Activated CD4-positive, alpha-beta memory T cell treated with anti-CD3 and anti-CD28 coated beads for 36 hours (primary cell): ENCODE measurements at regions of chr10 and their contacts with region 1.

Region 1: DNA sequence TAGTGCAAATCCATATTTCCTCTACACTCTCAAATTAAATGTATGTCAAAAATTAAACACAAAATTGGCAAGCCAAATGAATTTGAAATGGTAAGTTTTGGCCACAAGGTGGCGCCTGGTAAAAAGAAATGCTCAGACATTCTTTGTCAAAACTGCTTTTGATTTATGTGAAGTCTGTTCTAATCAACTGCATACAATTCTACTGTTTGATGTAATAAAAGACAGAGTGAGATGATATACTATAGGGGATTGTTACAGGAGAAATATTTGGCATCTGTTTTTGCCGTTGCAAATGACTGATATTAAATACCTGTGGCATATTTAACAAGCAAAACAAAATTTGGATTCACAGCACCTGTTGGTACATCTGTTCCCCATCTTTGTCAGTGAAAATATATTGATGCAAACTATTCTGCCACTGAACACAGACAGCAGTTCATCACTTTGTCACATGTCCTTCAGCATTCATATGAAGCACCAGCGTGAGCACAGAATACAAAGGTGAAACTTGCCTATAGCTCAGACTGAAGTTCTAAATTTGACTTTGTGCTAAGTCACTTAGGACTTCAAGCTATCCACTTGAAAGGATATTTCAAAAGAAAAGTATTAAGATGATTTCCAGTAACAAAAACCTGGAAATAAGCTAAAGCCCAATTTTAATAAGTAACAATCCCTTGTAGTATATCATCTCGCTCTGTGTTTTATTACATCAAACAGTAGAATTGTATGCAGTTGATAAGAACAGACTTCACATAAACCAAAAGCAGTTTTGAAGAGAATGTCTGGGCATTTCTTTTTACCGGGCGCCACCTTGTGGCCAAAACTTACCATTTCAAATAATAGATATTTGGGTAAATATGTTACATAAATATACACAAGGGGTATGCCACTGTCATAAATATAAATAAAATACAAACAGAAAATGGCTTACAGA is 10.2 kb upstream of the CH25H start:
- DNase-seq: peak; percentile 70
- H3K4me3 Mint-ChIP-seq: no peak overlapping the region
- H3K27ac Mint-ChIP-seq: no peak overlapping the region
- H3K4me1 Mint-ChIP-seq: peaks cover 9% of the 10 kb centered on the region
- H3K27me3 Mint-ChIP-seq: no peaks in the 10 kb centered on the region

Region 2: DNA sequence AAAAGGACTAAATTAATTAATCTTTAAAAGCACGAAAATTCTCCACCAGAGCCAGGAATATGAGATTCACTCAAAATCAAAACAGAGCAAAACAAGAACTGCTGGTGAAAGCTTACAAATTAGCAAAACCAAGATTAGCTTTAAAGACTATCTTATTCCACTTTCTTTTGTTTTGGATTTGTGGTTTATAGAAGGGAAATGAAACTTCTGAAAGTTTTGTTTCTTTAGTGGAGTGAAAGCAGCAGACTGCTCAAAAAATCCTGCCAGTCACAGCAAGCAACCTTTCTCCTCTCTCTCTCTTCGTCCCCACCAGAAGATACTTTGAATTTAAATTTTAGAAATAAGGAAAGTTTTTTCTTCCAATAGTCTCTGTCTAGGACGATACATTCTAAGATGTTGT is 272.5 kb before region 1 on chr10:
- CTCF ChIA-PET with region 1: interaction called, 29 read pairs
- POLR2A ChIA-PET with region 1: no interaction called
- intact Hi-C with region 1: no loop called
- DNase-seq: no peak
- H3K4me3 Mint-ChIP-seq: no peak overlapping the region
- H3K27ac Mint-ChIP-seq: no peak overlapping the region
- H3K4me1 Mint-ChIP-seq: peaks cover 14% of the 10 kb centered on the region
- H3K27me3 Mint-ChIP-seq: no peaks in the 10 kb centered on the region

Region 3: DNA sequence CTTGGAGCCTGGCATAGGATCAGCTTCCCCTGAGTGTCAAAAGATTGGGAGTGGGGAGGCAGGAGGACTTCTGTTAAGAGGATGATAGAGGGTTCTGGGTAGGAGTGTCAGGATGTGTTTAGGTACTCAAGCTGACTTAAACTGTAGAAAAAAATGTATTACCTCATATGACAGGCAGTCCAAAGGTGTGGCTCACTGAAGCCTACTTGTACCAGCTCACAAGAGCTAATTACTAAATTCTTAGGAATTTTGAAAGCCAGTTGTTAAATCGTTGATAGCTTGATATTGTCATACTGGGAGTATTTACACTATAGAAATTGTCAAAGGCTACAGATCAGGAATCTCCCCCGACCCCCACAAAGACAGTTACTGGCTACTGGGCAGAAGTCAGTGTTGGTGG is 194.6 kb before region 1 on chr10:
- CTCF ChIA-PET with region 1: interaction called, 18 read pairs
- POLR2A ChIA-PET with region 1: no interaction called
- intact Hi-C with region 1: no loop called
- DNase-seq: no peak
- H3K4me3 Mint-ChIP-seq: no peak overlapping the region
- H3K27ac Mint-ChIP-seq: no peak overlapping the region
- H3K4me1 Mint-ChIP-seq: peaks cover 6% of the 10 kb centered on the region
- H3K27me3 Mint-ChIP-seq: no peaks in the 10 kb centered on the region

Region 4: DNA sequence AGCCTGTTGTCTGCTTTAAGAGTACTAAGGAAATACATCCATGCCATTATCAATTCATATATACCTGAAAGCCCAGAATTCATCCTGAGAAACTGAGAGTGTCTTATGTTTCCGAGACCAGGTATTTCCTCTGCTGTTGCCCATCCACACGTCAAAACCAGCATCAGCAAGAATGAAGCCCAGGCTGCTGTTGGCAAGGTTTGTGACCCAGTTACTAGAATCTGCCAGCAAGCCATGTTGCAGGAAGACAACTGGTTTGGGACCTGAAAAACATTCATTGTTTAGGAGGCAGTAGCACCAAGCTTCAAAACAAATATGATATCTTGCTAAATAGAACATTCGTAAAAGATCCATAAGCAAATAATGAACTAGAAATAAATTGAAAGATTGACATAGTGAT is 10.8 kb after region 1 on chr10:
- CTCF ChIA-PET with region 1: interaction called, 12 read pairs
- POLR2A ChIA-PET with region 1: no interaction called
- intact Hi-C with region 1: no loop called
- DNase-seq: no peak
- H3K4me3 Mint-ChIP-seq: no peak overlapping the region
- H3K27ac Mint-ChIP-seq: no peak overlapping the region
- H3K4me1 Mint-ChIP-seq: peaks cover 2% of the 10 kb centered on the region
- H3K27me3 Mint-ChIP-seq: no peaks in the 10 kb centered on the region

Region 5: GRCh38 chr10:89251409-89252224 is 34.3 kb after region 1 on chr10 and contains the start of gene LIPA:
- CTCF ChIA-PET with region 1: interaction called, 18 read pairs
- POLR2A ChIA-PET with region 1: no interaction called
- intact Hi-C with region 1: loop called (anchors 2 kb)
- DNase-seq: peak; percentile 96
- H3K4me3 Mint-ChIP-seq: peak within 1 kb of the TSS; percentile 83
- H3K27ac Mint-ChIP-seq: peak within 1 kb of the TSS; percentile 46
- H3K4me1 Mint-ChIP-seq: peaks cover 30% of the 10 kb centered on the region
- H3K27me3 Mint-ChIP-seq: no peaks in the 10 kb centered on the region
- total RNA-seq, gene LIPA: 22.7 to 23.8 TPM

Region 6: GRCh38 chr10:89888321-89889070 is 671.2 kb after region 1 on chr10:
- CTCF ChIA-PET with region 1: no interaction called
- POLR2A ChIA-PET with region 1: no interaction called
- intact Hi-C with region 1: no loop called
- DNase-seq: no peak
- H3K4me3 Mint-ChIP-seq: no peak overlapping the region
- H3K27ac Mint-ChIP-seq: no peak overlapping the region
- H3K4me1 Mint-ChIP-seq: no peaks in the 10 kb centered on the region
- H3K27me3 Mint-ChIP-seq: peaks cover 15% of the 10 kb centered on the region